B cell (primary cell): ENCODE measurements at regions of chr7 and their contacts with region 1.

Region 1: DNA sequence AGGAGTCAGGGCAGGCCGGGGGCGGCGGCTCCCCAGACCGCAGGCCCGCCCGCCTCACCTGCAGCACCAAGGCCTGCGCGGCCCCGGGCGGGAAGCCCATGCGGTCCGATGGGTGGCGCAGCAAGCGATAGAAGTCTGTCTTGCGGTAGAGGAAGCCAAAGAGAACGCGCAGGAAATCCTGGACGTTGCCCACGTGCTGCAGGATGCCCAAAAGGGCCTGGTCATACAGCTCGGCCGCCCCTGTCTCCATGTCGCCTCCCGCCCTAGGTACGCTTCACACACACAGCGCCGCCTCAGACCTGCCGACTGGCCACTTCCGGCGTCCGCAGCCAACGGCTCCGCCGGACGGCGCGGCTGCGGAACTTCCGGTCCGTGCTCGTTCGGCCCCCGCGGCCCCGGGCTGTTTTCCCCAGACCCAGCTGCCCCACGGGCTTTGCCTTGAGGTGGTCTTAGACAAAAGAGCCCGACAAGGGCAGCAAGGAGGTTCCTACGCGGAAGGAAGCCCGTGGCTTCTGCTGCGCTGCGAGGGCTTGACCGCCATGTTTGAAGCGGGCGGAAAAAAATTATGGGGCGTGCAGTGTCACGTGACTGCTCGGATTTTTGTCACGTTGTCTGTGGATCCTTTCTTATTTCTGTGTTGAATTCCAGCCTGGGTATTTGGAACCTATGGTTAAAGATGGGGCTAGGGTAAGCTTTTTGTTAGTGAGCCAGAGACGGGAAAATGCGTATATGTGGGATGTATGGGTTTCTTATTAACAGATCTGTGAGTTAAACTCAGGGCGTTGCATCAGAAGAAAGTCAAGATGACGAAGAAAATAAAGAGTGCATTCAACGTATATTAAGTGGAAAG is at the start of gene NUDCD3:
- DNase-seq: peak; percentile 91
- ATAC-seq: peak; percentile 84
- H3K4me3 ChIP-seq: peak within 1 kb of the TSS; percentile 89 to 98 (median 93)
- H3K4me3 Mint-ChIP-seq: peak within 1 kb of the TSS; percentile 91
- H3K27ac ChIP-seq: peak within 1 kb of the TSS; percentile 93 to 94
- H3K27ac Mint-ChIP-seq: peak within 1 kb of the TSS; percentile 93
- H3K4me1 ChIP-seq: peaks cover 19 to 28% of the 10 kb centered on the region in 2 donors
- H3K4me1 Mint-ChIP-seq: peaks cover 44% of the 10 kb centered on the region
- H3K27me3 ChIP-seq: peaks cover 0 to 6% (median 3%) of the 10 kb centered on the region in 4 experiments
- H3K27me3 Mint-ChIP-seq: peaks cover 8% of the 10 kb centered on the region
- CTCF ChIP-seq: peak; percentile 27
- total RNA-seq, gene NUDCD3: 101 and 120 TPM in 2 replicates

Region 2: GRCh38 chr7:43869006-43869866 is 621.3 kb before region 1 on chr7 and contains the start of gene MRPS24:
- CTCF ChIA-PET with region 1: no interaction called
- POLR2A ChIA-PET with region 1: no interaction called
- intact Hi-C with region 1: loop called (anchors 5 kb)
- DNase-seq: peak; percentile 95
- ATAC-seq: peak; percentile 100
- H3K4me3 ChIP-seq: peak within 1 kb of the TSS; percentile 17 to 91 (median 70)
- H3K4me3 Mint-ChIP-seq: peak within 1 kb of the TSS; percentile 91
- H3K27ac ChIP-seq: peak within 1 kb of the TSS; percentile 46 to 63
- H3K27ac Mint-ChIP-seq: peak within 1 kb of the TSS; percentile 84
- H3K4me1 ChIP-seq: peaks cover 15 to 19% of the 10 kb centered on the region in 2 donors
- H3K4me1 Mint-ChIP-seq: peaks cover 22% of the 10 kb centered on the region
- H3K27me3 ChIP-seq: no peaks in the 10 kb centered on the region
- H3K27me3 Mint-ChIP-seq: no peaks in the 10 kb centered on the region
- CTCF ChIP-seq: no peak
- total RNA-seq, gene MRPS24: 44.3 and 54.1 TPM in 2 replicates

Region 3: GRCh38 chr7:43977525-43977924 is 513.1 kb before region 1 on chr7:
- CTCF ChIA-PET with region 1: no interaction called
- POLR2A ChIA-PET with region 1: no interaction called
- intact Hi-C with region 1: loop called (anchors 10 kb)
- DNase-seq: no peak
- ATAC-seq: no peak
- H3K4me3 ChIP-seq: no peak overlapping the region
- H3K4me3 Mint-ChIP-seq: no peak overlapping the region
- H3K27ac ChIP-seq: no peak overlapping the region
- H3K27ac Mint-ChIP-seq: no peak overlapping the region
- H3K4me1 ChIP-seq: no peaks in the 10 kb centered on the region
- H3K4me1 Mint-ChIP-seq: no peaks in the 10 kb centered on the region
- H3K27me3 ChIP-seq: no peaks in the 10 kb centered on the region
- H3K27me3 Mint-ChIP-seq: no peaks in the 10 kb centered on the region
- CTCF ChIP-seq: no peak

Region 4: GRCh38 chr7:44200647-44201461 is 289.7 kb before region 1 on chr7 and contains the start of gene YKT6:
- CTCF ChIA-PET with region 1: interaction called, 4 read pairs
- POLR2A ChIA-PET with region 1: interaction called, 3 read pairs
- intact Hi-C with region 1: loop called (anchors 1 kb)
- DNase-seq: peak; percentile 96
- ATAC-seq: peak; percentile 97
- H3K4me3 ChIP-seq: peak within 1 kb of the TSS; percentile 41 to 81 (median 70)
- H3K4me3 Mint-ChIP-seq: peak within 1 kb of the TSS; percentile 88
- H3K27ac ChIP-seq: peak within 1 kb of the TSS; percentile 47 to 77
- H3K27ac Mint-ChIP-seq: peak within 1 kb of the TSS; percentile 74
- H3K4me1 ChIP-seq: peaks cover 7 to 11% of the 10 kb centered on the region in 2 donors
- H3K4me1 Mint-ChIP-seq: peaks cover 23% of the 10 kb centered on the region
- H3K27me3 ChIP-seq: no peaks in the 10 kb centered on the region
- H3K27me3 Mint-ChIP-seq: peaks cover 11% of the 10 kb centered on the region
- CTCF ChIP-seq: peak; percentile 56
- total RNA-seq, gene YKT6: 62.3 and 73.4 TPM in 2 replicates

Region 5: DNA sequence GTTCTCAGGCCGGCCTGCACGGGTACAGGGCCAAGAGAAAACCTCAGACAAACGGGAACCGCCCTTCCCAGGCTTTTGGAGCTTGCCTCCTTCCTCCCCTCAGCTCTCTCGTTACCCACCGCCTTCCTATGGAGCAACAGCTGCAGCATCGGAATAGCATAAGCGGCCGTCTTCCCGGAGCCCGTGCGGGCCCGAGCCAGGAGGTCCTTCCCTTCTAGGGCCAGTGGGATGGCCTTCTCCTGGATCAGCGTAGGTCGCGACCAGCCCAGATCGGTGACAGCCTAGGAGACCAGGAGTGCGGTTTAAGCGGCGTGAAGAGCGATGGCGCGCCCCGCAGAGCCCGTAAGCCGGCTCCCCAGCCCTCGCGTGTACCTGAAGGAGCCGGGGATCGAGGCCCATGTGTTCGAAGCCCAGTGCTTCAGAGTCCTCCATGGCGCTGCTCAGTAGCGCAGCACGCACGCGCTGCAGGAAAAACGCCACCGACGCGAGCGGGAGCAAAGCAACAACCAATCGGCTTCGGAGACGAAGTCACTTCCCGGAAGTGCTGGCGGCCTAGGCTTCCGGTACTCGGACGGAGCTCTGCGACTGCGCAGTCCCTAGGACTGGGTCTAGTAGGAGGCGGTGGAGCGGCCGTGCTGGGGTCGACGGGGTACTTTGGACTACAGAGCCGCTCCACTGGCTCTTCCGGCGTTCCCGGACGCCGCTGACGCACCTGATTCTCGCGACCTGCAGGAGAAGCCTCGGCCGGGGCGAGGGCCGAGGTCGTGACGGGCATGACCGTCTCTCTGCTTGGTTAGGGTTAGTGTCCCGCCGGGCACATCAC is 83.1 kb after region 1 on chr7 and contains the start of gene DDX56:
- CTCF ChIA-PET with region 1: interaction called, 3 read pairs
- POLR2A ChIA-PET with region 1: interaction called, 4 read pairs
- intact Hi-C with region 1: loop called (anchors 2 kb)
- DNase-seq: peak; percentile 94
- ATAC-seq: peak; percentile 97
- H3K4me3 ChIP-seq: peak within 1 kb of the TSS; percentile 60 to 94 (median 84)
- H3K4me3 Mint-ChIP-seq: peak within 1 kb of the TSS; percentile 98
- H3K27ac ChIP-seq: peak within 1 kb of the TSS; percentile 84 to 93
- H3K27ac Mint-ChIP-seq: peak within 1 kb of the TSS; percentile 97
- H3K4me1 ChIP-seq: peaks cover 23 to 29% of the 10 kb centered on the region in 2 donors
- H3K4me1 Mint-ChIP-seq: peaks cover 38% of the 10 kb centered on the region
- H3K27me3 ChIP-seq: no peaks in the 10 kb centered on the region
- H3K27me3 Mint-ChIP-seq: no peaks in the 10 kb centered on the region
- CTCF ChIP-seq: no peak
- total RNA-seq, gene DDX56: 102 and 104 TPM in 2 replicates